Activated CD4-positive, alpha-beta T cell treated with anti-CD3 and anti-CD28 coated beads, Interleukin-2, amount 10 ng/mL, durations not matched to agents 7 days and 5 days (primary cell): ENCODE measurements at regions of chr6 and their contacts with region 1.

Region 1: DNA sequence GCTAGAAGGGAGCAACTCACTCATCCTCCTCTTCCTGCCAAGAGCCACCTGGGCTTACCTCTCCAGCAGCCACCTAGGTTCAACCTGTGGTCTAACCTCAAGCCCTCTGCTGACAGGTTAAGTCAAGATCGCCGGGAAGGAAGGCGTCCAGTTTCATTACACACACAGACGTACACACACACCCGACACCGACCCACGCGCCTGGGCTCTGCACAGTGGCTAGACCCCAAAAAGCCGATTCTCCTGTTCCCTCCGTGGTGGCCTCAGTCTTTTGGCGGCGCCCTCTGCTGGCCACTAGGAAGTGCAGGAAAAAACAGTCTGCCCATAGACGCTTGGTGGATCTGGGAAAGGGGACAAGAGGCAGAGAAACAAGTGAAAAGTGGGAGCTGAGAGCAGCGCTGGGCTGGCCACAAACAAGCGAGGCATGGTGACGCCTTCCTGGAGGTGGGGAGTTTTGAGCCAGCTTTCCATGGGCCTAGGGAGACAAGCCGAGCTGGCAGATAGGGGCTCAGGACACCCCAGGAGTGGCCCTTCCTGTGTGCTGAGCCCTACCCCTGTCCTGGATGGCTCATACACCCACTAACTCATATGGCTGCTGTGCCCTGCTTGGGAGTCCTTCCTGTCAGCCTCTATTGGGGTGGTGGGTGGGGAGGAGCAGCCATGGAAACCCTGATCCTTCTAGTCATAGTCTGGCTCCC is 52.7 kb downstream of the MRPL14 start:
- DNase-seq: peak; percentile 71
- H3K4me3 Mint-ChIP-seq: peak overlapping the region; percentile 87
- H3K27ac Mint-ChIP-seq: peak overlapping the region; percentile 80
- H3K4me1 Mint-ChIP-seq: peaks cover 26% of the 10 kb centered on the region
- H3K27me3 Mint-ChIP-seq: peaks cover 13% of the 10 kb centered on the region

Region 2: GRCh38 chr6:43667245-43668150 is 407.1 kb before region 1 on chr6:
- CTCF ChIA-PET with region 1: interaction called, 20 read pairs
- POLR2A ChIA-PET with region 1: no interaction called
- DNase-seq: peak; percentile 74
- H3K4me3 Mint-ChIP-seq: no peak overlapping the region
- H3K27ac Mint-ChIP-seq: peak overlapping the region; percentile 69
- H3K4me1 Mint-ChIP-seq: peaks cover 47% of the 10 kb centered on the region
- H3K27me3 Mint-ChIP-seq: no peaks in the 10 kb centered on the region

Region 3: GRCh38 chr6:43758617-43759050 is 316.0 kb before region 1 on chr6:
- CTCF ChIA-PET with region 1: interaction called, 13 read pairs
- POLR2A ChIA-PET with region 1: no interaction called
- DNase-seq: no peak
- H3K4me3 Mint-ChIP-seq: no peak overlapping the region
- H3K27ac Mint-ChIP-seq: no peak overlapping the region
- H3K4me1 Mint-ChIP-seq: no peaks in the 10 kb centered on the region
- H3K27me3 Mint-ChIP-seq: peaks cover 7% of the 10 kb centered on the region

Region 4: DNA sequence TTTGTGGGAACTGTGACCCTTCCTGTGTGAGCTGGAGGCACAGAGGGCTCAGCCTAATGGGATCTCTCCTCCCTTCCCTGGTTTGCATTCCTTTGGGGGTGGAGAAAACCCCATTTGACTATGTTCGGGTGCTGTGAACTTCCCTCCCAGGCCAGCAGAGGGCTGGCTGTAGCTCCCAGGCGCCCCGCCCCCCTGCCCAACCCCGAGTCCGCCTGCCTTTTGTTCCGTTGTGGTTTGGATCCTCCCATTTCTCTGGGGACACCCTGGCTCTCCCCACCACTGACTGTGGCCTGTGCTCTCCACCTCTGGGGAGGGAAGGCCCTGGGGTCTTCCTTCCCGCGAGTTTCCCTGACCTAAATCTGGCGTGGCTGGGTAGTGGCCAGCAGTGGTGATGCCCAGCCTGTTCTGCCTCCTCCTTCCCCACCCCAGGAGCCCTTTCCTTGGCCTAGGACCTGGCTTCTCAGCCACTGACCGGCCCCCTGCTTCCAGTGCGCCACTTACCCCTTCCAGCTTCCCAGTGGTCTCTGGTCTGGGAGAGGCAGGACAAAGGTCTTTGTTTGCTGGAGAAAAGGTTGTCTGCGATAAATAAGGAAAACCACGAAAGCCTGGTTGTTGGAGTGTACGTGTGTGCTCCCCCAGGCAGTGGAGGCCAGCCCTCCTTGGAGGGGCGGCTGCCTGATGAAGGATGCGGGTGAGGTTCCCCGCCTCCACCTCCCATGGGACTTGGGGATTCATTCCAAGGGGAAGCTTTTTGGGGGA is 299.6 kb before region 1 on chr6:
- CTCF ChIA-PET with region 1: interaction called, 45 read pairs
- POLR2A ChIA-PET with region 1: interaction called, 3 read pairs
- DNase-seq: peak; percentile 72
- H3K4me3 Mint-ChIP-seq: no peak overlapping the region
- H3K27ac Mint-ChIP-seq: peak overlapping the region; percentile 60
- H3K4me1 Mint-ChIP-seq: peaks cover 45% of the 10 kb centered on the region
- H3K27me3 Mint-ChIP-seq: no peaks in the 10 kb centered on the region

Region 5: DNA sequence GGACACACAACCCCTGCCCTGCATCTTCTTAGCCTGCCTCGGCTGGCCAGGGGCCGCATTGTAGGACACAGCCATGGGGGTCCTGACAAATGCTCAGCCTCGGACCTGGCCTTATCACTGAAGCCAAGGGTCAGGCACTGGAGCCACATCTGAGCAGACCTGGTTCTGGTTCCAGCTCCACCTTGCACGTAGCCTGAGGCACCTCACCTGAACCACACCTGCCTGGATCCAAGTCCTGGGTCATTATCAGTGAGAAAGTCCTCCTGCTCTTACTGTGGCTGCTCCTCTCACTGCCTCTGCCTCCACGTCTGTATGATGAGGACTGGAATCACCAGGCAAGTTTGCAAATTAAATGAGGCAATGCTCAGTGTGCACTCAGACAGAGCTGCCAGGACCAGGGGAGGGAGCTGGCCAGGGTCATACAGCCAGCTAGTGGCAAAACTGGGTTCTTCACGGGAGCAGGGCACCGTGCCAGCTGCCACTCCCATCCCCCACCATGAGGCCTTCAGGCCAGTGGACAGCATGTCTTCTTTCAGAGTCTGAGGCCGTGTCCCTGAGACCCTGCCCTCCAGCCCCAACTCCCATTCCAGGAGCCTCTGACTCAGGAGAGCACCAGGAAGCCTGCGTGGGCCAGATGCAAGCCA is 12.5 kb after region 1 on chr6:
- CTCF ChIA-PET with region 1: interaction called, 22 read pairs
- POLR2A ChIA-PET with region 1: no interaction called
- DNase-seq: no peak
- H3K4me3 Mint-ChIP-seq: no peak overlapping the region
- H3K27ac Mint-ChIP-seq: no peak overlapping the region
- H3K4me1 Mint-ChIP-seq: no peaks in the 10 kb centered on the region
- H3K27me3 Mint-ChIP-seq: no peaks in the 10 kb centered on the region